H1 (cell line): ENCODE measurements at regions of chr6 and their contacts with region 1.

Region 1: GRCh38 chr6:33271458-33272274 is at the starts of genes RPS18 and VPS52:
- DNase-seq: peak; percentile 88
- H3K4me3 ChIP-seq: peak within 1 kb of the TSS; percentile 81 to 100 (median 100)
- H3K27ac ChIP-seq: peak within 1 kb of the TSS; percentile 98
- H3K4me1 ChIP-seq: peaks cover 0 to 22% (median 8%) of the 10 kb centered on the region in 4 experiments; a peak in 6 of 7 replicates
- H3K27me3 ChIP-seq: no peaks in the 10 kb centered on the region
- CTCF ChIP-seq: no peak
- EP300 ChIP-seq: no peak
- POLR2A ChIP-seq: peak in 1 of 2 experiments; percentile 98; a peak in 2 of 3 replicates
- RAD21 ChIP-seq: no peak
- total RNA-seq, gene RPS18: 2,791 and 2,796 TPM in 2 replicates
- total RNA-seq, gene VPS52: 35.0 and 36.5 TPM in 2 replicates

Region 2: DNA sequence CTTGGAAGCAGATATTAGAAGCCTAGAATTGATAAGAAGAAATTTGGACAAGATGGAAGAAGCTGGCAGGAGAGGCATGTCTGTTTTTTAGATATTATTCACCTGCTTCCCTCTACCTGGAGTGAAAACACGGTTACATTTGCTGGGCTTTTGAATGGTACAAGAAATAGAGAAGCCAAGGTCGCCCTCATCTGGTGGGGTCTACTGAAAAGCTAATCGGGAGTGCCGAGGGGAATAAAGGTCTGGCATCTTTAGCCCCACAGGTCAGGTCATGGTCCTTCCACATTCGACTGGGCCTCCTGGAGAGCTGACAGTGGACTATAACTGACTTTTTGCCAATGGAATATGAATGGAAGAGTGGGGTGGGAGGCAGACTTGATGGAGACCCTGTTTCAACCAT is 1348.7 kb before region 1 on chr6:
- CTCF ChIA-PET with region 1: no interaction called
- POLR2A ChIA-PET with region 1: no interaction called
- DNase-seq: no peak
- H3K4me3 ChIP-seq: no peak overlapping the region
- H3K27ac ChIP-seq: no peak overlapping the region
- H3K4me1 ChIP-seq: no peaks in the 10 kb centered on the region
- H3K27me3 ChIP-seq: no peaks in the 10 kb centered on the region
- CTCF ChIP-seq: peak; percentile 32 to 57 (median 55)
- EP300 ChIP-seq: no peak
- POLR2A ChIP-seq: no peak
- RAD21 ChIP-seq: peak; percentile 68 to 76

Region 3: DNA sequence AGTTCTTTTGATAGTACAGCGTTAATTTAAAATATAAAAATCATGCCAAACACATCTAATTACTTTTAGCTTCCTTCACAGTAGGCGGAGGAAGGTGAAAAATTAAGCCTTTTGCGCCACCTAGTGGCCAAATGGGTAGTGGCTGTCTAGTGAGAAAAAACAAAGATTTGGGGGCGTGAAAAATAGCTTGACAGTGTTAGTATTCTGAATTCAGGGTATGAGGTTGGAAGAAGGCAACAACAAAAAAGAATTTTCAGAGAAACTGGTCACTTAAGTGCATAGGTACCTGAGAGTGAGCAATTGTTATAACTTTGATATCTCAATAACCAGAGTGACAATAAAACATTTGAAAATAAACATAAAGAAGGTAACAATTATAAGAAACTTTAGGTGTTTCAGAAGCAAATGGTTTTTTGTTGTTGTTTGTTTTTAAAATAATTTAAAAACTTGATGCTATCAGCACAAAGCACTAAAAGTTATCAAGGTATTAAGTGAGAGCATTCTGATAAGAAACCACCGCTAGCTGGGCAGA is 403.3 kb before region 1 on chr6:
- CTCF ChIA-PET with region 1: no interaction called
- POLR2A ChIA-PET with region 1: no interaction called
- DNase-seq: peak in 1 of 2 experiments; percentile 84
- H3K4me3 ChIP-seq: no peak overlapping the region
- H3K27ac ChIP-seq: no peak overlapping the region
- H3K4me1 ChIP-seq: no peaks in the 10 kb centered on the region
- H3K27me3 ChIP-seq: no peaks in the 10 kb centered on the region
- CTCF ChIP-seq: peak in 2 of 3 experiments; percentile 73 to 85; a peak in 3 of 4 replicates
- EP300 ChIP-seq: no peak
- POLR2A ChIP-seq: no peak
- RAD21 ChIP-seq: peak; percentile 91 to 92

Region 4: DNA sequence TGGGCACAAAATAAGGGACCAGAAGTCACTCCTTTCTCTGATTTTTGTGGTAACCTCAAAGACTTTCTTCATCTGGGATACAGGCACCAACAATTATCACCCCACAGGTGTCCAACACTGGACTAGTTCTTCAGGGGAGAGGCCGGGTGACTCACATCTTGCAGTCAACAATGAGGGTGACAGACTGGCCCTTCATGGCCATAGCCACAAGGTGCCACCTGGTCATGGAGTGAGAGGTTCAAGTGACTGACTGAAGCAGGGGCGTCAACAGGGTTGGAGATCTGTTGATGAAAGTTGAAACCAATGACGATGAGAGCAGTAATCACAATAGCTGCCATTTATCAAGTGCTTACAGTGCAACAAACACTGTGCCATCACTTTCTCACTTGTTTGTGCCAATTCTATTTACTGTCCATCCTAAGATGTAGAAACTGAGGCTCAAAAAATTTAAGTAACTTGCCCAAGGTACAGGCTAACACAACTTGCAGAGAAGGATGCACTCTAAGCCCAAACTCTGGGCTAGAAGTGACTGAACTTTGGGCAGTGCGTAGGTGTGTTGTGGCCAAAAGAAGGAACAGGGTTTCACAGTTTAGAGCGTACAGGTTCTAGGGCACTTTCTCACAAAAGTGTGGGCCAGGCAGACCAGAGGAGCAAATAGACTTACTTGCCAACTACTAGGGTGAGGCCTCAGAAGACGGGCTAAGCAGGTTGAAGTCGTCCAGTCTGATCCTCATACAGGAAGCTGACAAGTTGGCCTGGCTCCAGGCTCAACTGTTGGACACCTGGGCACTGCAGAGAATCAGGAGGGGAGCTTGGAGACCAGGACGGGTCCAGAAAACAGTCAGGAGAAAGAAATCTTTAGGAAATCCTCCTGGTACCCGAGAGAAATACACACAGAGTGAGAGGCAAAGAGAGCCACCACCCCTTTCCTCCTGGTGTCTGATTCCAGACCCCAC is 165.5 kb before region 1 on chr6:
- CTCF ChIA-PET with region 1: no interaction called
- POLR2A ChIA-PET with region 1: no interaction called
- DNase-seq: no peak
- H3K4me3 ChIP-seq: no peak overlapping the region
- H3K27ac ChIP-seq: no peak overlapping the region
- H3K4me1 ChIP-seq: no peaks in the 10 kb centered on the region
- H3K27me3 ChIP-seq: no peaks in the 10 kb centered on the region; a peak in 1 of 7 replicates
- CTCF ChIP-seq: no peak
- EP300 ChIP-seq: no peak
- POLR2A ChIP-seq: no peak
- RAD21 ChIP-seq: no peak

Region 5: GRCh38 chr6:33183071-33183683 is 88.5 kb before region 1 on chr6:
- CTCF ChIA-PET with region 1: no interaction called
- POLR2A ChIA-PET with region 1: no interaction called
- DNase-seq: no peak
- H3K4me3 ChIP-seq: no peak overlapping the region
- H3K27ac ChIP-seq: no peak overlapping the region
- H3K4me1 ChIP-seq: peaks cover 0 to 5% (median 2%) of the 10 kb centered on the region in 4 experiments; a peak in 2 of 7 replicates
- H3K27me3 ChIP-seq: no peaks in the 10 kb centered on the region; a peak in 1 of 7 replicates
- CTCF ChIP-seq: no peak
- EP300 ChIP-seq: no peak
- POLR2A ChIP-seq: no peak
- RAD21 ChIP-seq: no peak

Region 6: DNA sequence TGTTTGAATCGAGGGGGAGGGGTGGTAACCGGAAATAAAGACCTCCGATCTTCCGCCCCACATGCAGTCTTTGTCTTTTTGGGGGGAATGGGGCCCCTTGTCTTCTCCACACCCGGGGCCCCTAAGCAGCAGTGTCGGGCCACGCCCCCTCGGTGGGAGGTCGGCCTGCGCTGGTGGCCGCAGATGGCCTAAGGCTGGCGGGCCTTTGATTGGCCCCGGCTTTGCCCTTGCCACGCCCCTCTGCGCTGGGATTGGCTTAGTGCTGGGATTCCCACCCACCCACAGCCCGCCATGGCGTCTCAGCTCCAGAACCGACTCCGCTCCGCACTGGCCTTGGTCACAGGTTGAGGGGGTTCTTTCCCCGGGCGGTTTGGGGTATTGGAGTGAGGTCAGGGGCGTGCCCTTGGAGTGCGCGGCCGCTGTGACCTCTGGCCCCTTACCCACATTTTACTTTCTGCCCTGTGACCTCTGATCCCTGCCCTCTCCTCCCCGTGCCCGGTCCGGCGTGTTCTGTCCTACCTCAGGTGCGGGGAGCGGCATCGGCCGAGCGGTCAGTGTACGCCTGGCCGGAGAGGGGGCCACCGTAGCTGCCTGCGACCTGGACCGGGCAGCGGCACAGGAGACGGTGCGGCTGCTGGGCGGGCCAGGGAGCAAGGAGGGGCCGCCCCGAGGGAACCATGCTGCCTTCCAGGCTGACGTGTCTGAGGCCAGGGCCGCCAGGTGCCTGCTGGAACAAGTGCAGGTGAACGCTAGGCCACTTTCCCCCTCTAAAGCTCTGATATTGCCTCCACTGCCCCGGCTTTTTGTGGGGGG is 67.1 kb before region 1 on chr6 and contains the start of gene HSD17B8:
- CTCF ChIA-PET with region 1: no interaction called
- POLR2A ChIA-PET with region 1: interaction called, 16 read pairs
- DNase-seq: peak; percentile 72 to 98
- H3K4me3 ChIP-seq: peak within 1 kb of the TSS; percentile 71 to 93 (median 72)
- H3K27ac ChIP-seq: no peak within 1 kb of the TSS
- H3K4me1 ChIP-seq: peaks cover 4 to 36% (median 11%) of the 10 kb centered on the region in 4 experiments
- H3K27me3 ChIP-seq: peaks cover 9 to 32% (median 25%) of the 10 kb centered on the region in 4 experiments; a peak in 6 of 7 replicates
- CTCF ChIP-seq: no peak
- EP300 ChIP-seq: no peak
- POLR2A ChIP-seq: peak in 1 of 2 experiments; percentile 48; a peak in 2 of 3 replicates
- RAD21 ChIP-seq: no peak
- total RNA-seq, gene HSD17B8: 3.3 and 3.6 TPM in 2 replicates

Region 7: DNA sequence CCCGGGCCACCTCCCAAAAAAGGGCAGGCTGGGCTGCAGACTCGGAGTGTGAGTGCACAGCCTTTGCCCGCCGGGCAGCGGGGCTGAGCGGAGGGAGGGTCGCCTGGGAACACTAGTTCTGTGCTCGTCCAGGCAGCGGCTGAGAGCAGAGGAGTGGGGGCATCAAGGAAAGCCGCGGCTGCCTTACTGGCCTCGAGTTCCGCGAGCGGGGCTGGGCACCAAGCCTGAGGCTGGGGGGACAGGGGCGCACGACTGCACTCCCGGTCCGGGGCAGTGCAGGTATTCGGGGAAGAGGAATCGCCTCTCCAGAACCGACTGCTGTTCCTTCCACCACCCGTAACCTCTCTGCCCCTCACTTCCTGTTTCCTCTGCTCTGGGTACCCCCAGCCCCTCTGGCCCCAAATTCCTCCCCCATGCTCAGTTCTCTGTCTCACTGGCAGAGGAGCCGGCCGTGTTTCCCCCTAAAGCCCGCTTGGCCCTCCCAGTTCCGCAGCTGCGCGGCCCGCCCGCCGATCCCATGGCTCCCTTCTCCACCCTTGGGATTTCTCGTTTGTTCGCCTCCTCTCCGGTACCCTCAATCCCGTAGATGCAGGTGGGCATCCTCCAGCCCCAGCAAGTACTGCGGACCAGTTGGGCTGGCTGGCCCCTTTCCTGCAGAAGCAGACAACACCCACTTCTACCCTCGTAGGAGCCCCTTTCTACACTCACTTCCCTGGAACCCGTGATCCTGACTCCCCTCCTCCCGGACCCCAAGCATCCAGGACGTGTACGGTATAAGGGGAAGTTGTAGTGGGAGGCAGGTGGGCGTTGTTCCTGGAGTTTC is 58.3 kb before region 1 on chr6:
- CTCF ChIA-PET with region 1: no interaction called
- POLR2A ChIA-PET with region 1: interaction called, 12 read pairs
- DNase-seq: peak in 1 of 2 experiments; percentile 79
- H3K4me3 ChIP-seq: peak overlapping the region; percentile 50 to 72 (median 66)
- H3K27ac ChIP-seq: no peak overlapping the region
- H3K4me1 ChIP-seq: peaks cover 0 to 13% (median 4%) of the 10 kb centered on the region in 4 experiments; a peak in 6 of 7 replicates
- H3K27me3 ChIP-seq: peaks cover 32 to 71% (median 67%) of the 10 kb centered on the region in 4 experiments
- CTCF ChIP-seq: no peak
- EP300 ChIP-seq: no peak
- POLR2A ChIP-seq: peak in 1 of 2 experiments; percentile 62; a peak in 1 of 3 replicates
- RAD21 ChIP-seq: no peak

Region 8: DNA sequence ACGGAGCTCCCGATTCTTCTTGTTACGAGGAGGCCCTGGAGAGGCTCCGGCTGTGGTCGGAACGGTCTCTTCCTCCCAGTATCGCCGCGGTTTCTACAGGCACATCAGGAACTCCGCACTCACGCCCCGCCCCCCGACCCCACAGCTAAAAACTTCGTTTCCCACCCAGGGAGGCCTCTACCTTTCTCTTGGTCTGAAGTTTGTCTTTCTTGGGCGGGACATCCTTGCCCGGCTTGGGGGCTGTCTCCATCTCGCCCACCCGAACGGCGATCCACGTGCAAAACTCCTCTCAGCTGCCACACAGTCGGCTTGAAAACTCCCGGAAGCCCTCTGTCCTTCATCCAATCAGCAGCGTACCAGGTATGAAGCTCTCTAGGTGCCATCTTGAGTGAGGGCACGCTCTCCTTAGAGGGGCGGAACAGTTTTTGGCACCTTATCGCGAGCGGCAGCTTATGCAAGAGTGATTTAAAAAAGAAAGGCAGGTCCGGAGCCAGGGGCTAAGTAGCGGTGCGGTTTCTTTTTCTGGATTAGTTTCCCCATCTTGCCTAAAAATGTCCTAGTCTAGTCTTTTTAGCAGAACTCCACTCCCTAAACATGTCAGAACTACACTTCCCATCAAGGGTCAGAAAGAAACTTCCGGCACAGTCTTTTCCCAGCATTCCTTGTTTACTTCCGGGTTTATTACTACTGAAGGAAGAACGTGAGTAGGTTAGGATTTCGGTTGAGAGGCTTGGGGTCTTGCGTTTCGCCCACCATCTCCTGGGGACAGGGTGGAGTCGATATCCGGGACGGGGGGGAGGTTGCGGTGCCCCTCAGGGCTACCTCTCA is 17.5 kb after region 1 on chr6 and contains the starts of genes PFDN6 and WDR46:
- CTCF ChIA-PET with region 1: interaction called, 81 read pairs
- POLR2A ChIA-PET with region 1: interaction called, 337 read pairs
- DNase-seq: peak in 1 of 2 experiments; percentile 84
- H3K4me3 ChIP-seq: peak within 1 kb of the TSS; percentile 74 to 97 (median 84)
- H3K27ac ChIP-seq: peak within 1 kb of the TSS; percentile 37; the same call in 1 of the 2 replicates
- H3K4me1 ChIP-seq: peaks cover 0 to 11% (median 5%) of the 10 kb centered on the region in 4 experiments; a peak in 5 of 7 replicates
- H3K27me3 ChIP-seq: no peaks in the 10 kb centered on the region
- CTCF ChIP-seq: no peak
- EP300 ChIP-seq: no peak
- POLR2A ChIP-seq: peak in 1 of 2 experiments; percentile 76; a peak in 2 of 3 replicates
- RAD21 ChIP-seq: no peak
- total RNA-seq, gene PFDN6: 93.3 and 95.7 TPM in 2 replicates
- total RNA-seq, gene WDR46: 91.0 and 99.4 TPM in 2 replicates

Region 9: GRCh38 chr6:33299237-33299944 is 27.7 kb after region 1 on chr6:
- CTCF ChIA-PET with region 1: interaction called, 77 read pairs
- POLR2A ChIA-PET with region 1: interaction called, 337 read pairs
- DNase-seq: peak in 1 of 2 experiments; percentile 90
- H3K4me3 ChIP-seq: peak overlapping the region; percentile 76 to 99 (median 94)
- H3K27ac ChIP-seq: peak overlapping the region; percentile 79
- H3K4me1 ChIP-seq: peaks cover 0 to 6% (median 4%) of the 10 kb centered on the region in 4 experiments; a peak in 6 of 7 replicates
- H3K27me3 ChIP-seq: no peaks in the 10 kb centered on the region
- CTCF ChIP-seq: peak; percentile 73 to 86 (median 78)
- EP300 ChIP-seq: no peak
- POLR2A ChIP-seq: 0 out of 3 replicates have a peak, but pooled peaks of 1 of the 2 experiments have one; percentile 19
- RAD21 ChIP-seq: peak; percentile 32 to 56

Region 10: GRCh38 chr6:33317669-33318425 is 46.2 kb after region 1 on chr6 and contains the start of gene ZBTB22:
- CTCF ChIA-PET with region 1: interaction called, 7 read pairs
- POLR2A ChIA-PET with region 1: interaction called, 25 read pairs
- DNase-seq: peak; percentile 95 to 96
- H3K4me3 ChIP-seq: peak within 1 kb of the TSS; percentile 67 to 89 (median 78)
- H3K27ac ChIP-seq: peak within 1 kb of the TSS; percentile 83
- H3K4me1 ChIP-seq: peaks cover 0 to 34% (median 22%) of the 10 kb centered on the region in 4 experiments; a peak in 6 of 7 replicates
- H3K27me3 ChIP-seq: no peaks in the 10 kb centered on the region
- CTCF ChIP-seq: no peak
- EP300 ChIP-seq: no peak
- POLR2A ChIP-seq: peak in 1 of 2 experiments; percentile 70; a peak in 2 of 3 replicates
- RAD21 ChIP-seq: no peak
- total RNA-seq, gene ZBTB22: 9.8 and 9.9 TPM in 2 replicates

Region 11: GRCh38 chr6:33417903-33418689 is 146.4 kb after region 1 on chr6 and contains the start of gene CUTA:
- CTCF ChIA-PET with region 1: no interaction called
- POLR2A ChIA-PET with region 1: interaction called, 10 read pairs
- DNase-seq: peak; percentile 92 to 99
- H3K4me3 ChIP-seq: peak within 1 kb of the TSS; percentile 75 to 99 (median 93)
- H3K27ac ChIP-seq: peak within 1 kb of the TSS; percentile 89
- H3K4me1 ChIP-seq: peaks cover 8 to 34% (median 15%) of the 10 kb centered on the region in 4 experiments
- H3K27me3 ChIP-seq: no peaks in the 10 kb centered on the region
- CTCF ChIP-seq: peak in 1 of 3 experiments; percentile 64; a peak in 2 of 4 replicates
- EP300 ChIP-seq: peak in 1 of 2 experiments; percentile 62; a peak in 1 of 3 replicates
- POLR2A ChIP-seq: 0 out of 3 replicates have a peak, but pooled peaks of 1 of the 2 experiments have one; percentile 4
- RAD21 ChIP-seq: peak in 1 of 2 experiments; percentile 5; a peak in 1 of 4 replicates
- total RNA-seq, gene CUTA: 297 and 315 TPM in 2 replicates